Activated CD4-positive, alpha-beta T cell treated with anti-CD3 and anti-CD28 coated beads, Interleukin-2, amount 10 ng/mL, durations not matched to agents 24 days and 14 days (primary cell): ENCODE measurements at regions of chr3 and their contacts with region 1.

Region 1: GRCh38 chr3:177928156-177928873 is 607.9 kb upstream of the KCNMB2 start:
- DNase-seq: no peak
- H3K4me3 Mint-ChIP-seq: no peak overlapping the region
- H3K27ac Mint-ChIP-seq: no peak overlapping the region
- H3K4me1 Mint-ChIP-seq: peaks cover 3% of the 10 kb centered on the region
- H3K27me3 Mint-ChIP-seq: no peaks in the 10 kb centered on the region

Region 2: GRCh38 chr3:177883957-177884356 is 44.4 kb before region 1 on chr3:
- intact Hi-C with region 1: loop called (anchors 5 kb)
- DNase-seq: no peak
- H3K4me3 Mint-ChIP-seq: no peak overlapping the region
- H3K27ac Mint-ChIP-seq: no peak overlapping the region
- H3K4me1 Mint-ChIP-seq: peaks cover 12% of the 10 kb centered on the region
- H3K27me3 Mint-ChIP-seq: no peaks in the 10 kb centered on the region

Region 3: DNA sequence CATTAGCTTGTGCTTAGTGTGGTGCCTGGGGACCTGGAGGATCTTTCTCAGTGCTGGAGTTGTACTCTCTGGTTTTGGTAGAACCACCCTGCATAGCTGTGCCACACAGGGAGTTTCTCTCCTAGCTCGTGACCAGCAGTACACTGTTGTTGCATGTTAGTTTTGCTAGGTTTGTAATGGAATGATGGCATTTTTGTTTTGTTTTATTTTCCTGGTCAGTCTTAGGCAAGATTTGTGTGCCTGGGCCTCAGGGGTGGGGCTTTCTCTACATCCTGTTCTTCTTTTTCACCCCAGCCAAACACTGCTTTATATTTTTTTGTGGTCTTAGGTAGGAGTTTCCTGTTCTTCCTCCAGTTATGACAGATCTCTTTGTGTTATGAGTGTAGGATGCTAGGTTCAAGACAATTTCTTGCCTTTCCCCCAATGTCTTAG is 73.4 kb after region 1 on chr3:
- intact Hi-C with region 1: loop called (anchors 5 kb)
- DNase-seq: peak; percentile 77
- H3K4me3 Mint-ChIP-seq: peak overlapping the region; percentile 63
- H3K27ac Mint-ChIP-seq: peak overlapping the region; percentile 91
- H3K4me1 Mint-ChIP-seq: peaks cover 36% of the 10 kb centered on the region
- H3K27me3 Mint-ChIP-seq: no peaks in the 10 kb centered on the region